PC-3 (cell line): ENCODE measurements at regions of chr12 and their contacts with region 1.

Region 1: DNA sequence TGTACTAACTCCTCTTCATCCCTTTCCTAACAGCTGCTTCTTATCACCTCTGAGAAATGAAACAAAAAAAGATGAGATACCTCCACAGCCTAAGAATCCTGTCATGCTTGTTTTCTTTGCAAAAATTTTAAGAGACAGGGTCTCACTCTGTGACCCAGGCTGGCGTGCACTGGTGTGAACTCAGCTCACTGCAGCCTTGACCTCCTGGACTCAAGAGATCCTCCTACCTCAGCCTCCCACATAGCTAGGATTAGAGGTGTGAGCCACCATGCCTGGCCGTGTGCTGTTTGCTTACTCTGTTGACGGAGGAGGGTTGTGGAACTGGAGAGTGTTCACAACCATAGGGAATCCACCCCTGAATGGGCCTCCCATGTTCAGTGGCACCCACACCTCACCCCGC is 16.2 kb downstream of the CSRNP2 start:
- DNase-seq: no peak
- ATAC-seq: no peak
- H3K4me3 ChIP-seq: no peak overlapping the region
- H3K27ac ChIP-seq: no peak overlapping the region
- H3K4me1 ChIP-seq: no peaks in the 10 kb centered on the region
- H3K27me3 ChIP-seq: no peaks in the 10 kb centered on the region
- CTCF ChIP-seq: no peak

Region 2: GRCh38 chr12:51139292-51139844 is 72.1 kb after region 1 on chr12:
- CTCF ChIA-PET with region 1: no interaction called
- POLR2A ChIA-PET with region 1: interaction called, 10 read pairs
- intact Hi-C with region 1: no loop called
- DNase-seq: no peak
- ATAC-seq: no peak
- H3K4me3 ChIP-seq: no peak overlapping the region
- H3K27ac ChIP-seq: no peak overlapping the region
- H3K4me1 ChIP-seq: no peaks in the 10 kb centered on the region
- H3K27me3 ChIP-seq: no peaks in the 10 kb centered on the region
- CTCF ChIP-seq: no peak